GM12878 (cell line): ENCODE measurements at regions of chr10 and their contacts with region 1.

Region 1: DNA sequence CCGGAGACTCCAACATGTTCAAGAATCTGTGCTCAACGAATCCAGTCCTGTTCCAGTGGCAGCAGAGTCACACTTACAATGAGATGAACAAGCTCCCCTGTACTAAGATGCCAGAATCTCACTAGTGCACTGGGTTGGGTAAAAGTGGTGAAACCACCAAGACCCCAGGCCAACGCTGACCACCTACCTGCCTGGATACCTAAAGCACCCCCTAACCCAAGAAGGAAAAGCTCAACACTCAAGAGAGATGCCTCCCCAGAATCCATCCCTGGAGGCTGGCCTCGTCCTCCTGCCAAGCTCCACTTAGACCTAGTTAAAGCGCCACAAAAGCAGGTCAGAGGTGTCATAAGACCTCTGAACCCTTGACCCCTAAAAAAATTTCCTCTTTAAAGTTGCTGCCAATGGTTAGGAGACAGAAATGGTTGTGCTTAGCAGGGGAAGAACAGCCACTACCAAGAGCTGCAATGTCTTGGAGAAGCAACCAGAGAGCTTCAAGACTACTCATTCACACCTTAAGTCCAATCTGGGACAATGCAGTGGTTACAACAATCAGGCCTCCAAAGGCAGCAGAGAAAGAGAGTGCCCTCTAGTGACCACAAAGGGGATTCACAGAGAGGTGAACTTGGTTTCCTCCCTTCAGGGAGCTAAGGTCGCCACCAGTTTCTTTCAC is 94.6 kb upstream of the MACROH2A2 start:
- DNase-seq: no peak
- ATAC-seq: peak; percentile 81
- H3K4me3 ChIP-seq: no peak overlapping the region
- H3K27ac ChIP-seq: no peak overlapping the region
- H3K4me1 ChIP-seq: peaks cover 9% of the 10 kb centered on the region
- H3K27me3 ChIP-seq: peaks cover 0 to 2% of the 10 kb centered on the region in 2 experiments; a peak in 2 of 4 replicates
- CTCF ChIP-seq: peak; percentile 84 to 91 (median 90)
- EP300 ChIP-seq: no peak
- POLR2A ChIP-seq: no peak
- RAD21 ChIP-seq: peak; percentile 83

Region 2: DNA sequence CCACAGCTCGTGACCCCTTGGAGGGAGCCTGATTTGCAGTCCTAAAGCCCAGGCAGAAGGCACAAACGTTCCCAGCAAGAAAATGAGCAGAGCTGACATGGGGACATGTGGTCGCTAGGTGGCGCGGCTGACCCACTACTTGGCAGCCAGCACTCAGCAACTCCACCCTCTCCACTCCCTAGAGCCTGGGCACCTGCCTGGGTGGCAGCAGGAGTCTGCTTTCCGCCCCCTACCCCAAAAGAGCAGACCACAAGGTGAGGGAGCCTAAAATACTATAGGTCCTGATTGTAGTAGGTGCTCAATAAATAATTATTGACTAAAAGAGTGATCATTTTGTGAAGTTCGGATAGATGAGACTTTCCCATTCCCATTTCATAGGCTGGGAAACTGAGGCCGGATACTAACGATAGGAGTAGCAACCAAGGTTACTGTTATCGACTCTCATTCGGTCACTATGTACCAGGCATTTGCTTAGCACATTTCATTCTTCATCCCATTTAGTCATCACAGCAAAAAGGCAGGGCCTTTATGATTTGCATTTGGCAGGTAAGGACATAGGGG is 442.2 kb before region 1 on chr10:
- CTCF ChIA-PET with region 1: interaction called, 11 read pairs
- POLR2A ChIA-PET with region 1: no interaction called
- RAD21 ChIA-PET with region 1: no interaction called
- SMC1A ChIA-PET with region 1: no interaction called
- in situ Hi-C with region 1: no loop called
- intact Hi-C with region 1: no loop called
- DNase-seq: peak; percentile 16
- ATAC-seq: peak; percentile 100
- H3K4me3 ChIP-seq: no peak overlapping the region
- H3K27ac ChIP-seq: no peak overlapping the region
- H3K4me1 ChIP-seq: no peaks in the 10 kb centered on the region
- H3K27me3 ChIP-seq: no peaks in the 10 kb centered on the region; a peak in 1 of 4 replicates
- CTCF ChIP-seq: peak; percentile 92 to 98 (median 93); a peak in 5 of 6 replicates
- EP300 ChIP-seq: no peak
- POLR2A ChIP-seq: no peak
- RAD21 ChIP-seq: peak; percentile 85

Region 3: DNA sequence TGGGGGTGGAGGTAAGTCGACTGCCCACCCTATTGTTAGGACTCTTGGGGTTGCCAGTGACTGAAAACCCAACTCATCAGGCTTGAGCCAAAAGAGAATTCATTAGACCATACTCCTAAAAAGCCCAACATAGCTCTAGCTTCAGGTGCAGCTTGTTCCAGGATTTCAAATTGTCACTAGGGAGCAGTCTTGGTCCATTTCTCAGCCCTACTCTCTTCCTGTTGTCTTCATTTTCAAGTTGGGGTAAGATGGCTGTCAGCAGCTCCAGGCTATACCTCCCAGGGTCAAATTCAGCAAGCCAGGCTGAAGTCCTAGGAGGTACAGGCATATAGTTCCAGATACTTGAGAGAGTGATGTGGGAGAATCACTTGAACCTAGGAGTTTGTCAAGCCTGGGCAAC is 171.2 kb before region 1 on chr10:
- CTCF ChIA-PET with region 1: interaction called, 14 read pairs
- POLR2A ChIA-PET with region 1: no interaction called
- RAD21 ChIA-PET with region 1: interaction called, 8 read pairs
- SMC1A ChIA-PET with region 1: interaction called, 4 read pairs
- in situ Hi-C with region 1: no loop called
- intact Hi-C with region 1: no loop called
- DNase-seq: no peak
- ATAC-seq: no peak
- H3K4me3 ChIP-seq: no peak overlapping the region
- H3K27ac ChIP-seq: no peak overlapping the region
- H3K4me1 ChIP-seq: no peaks in the 10 kb centered on the region
- H3K27me3 ChIP-seq: peaks cover 0 to 1% of the 10 kb centered on the region in 2 experiments; a peak in 2 of 4 replicates
- CTCF ChIP-seq: peak in 2 of 3 experiments; percentile 9 to 16; a peak in 2 of 6 replicates
- EP300 ChIP-seq: no peak
- POLR2A ChIP-seq: no peak
- RAD21 ChIP-seq: peak; percentile 19; the same call in 1 of the 2 replicates

Region 4: DNA sequence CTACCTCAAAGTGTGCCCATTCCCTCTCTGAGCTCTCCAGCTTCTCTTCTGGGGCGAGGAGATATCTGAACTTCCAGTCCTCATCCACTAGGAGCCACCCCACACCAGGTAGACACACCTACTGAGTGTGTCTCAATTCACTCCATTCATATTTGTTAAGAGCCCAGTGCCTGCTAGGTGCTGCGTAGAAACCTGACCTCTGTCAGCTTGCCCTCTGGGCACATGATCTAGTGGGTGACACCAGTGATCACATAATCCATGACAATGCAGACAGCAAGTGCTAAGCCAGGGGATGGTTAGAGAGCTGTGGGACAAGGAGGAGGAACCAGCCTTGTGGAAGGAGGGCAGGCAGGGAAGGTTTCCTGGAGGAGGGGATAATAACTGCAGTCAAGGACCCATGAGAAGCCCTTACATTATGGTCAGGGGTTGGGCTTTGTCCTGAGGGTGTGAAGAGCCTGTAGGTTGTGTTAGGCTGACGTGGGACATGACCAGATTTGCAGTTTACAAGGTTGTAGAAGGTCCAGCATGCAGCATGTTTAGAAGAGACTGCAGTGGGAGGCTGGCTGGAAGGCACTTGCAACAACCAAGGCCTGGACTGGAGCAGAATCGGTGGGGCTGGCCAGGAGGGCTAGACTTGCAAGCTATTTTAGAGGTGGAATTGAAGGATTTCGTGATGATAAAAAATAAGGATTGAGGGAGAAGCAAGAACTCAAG is 74.6 kb before region 1 on chr10:
- CTCF ChIA-PET with region 1: interaction called, 6 read pairs
- POLR2A ChIA-PET with region 1: no interaction called
- RAD21 ChIA-PET with region 1: interaction called, 12 read pairs
- SMC1A ChIA-PET with region 1: interaction called, 3 read pairs
- in situ Hi-C with region 1: no loop called
- intact Hi-C with region 1: no loop called
- DNase-seq: no peak
- ATAC-seq: peak; percentile 44; the same call in 2 of the 3 replicates
- H3K4me3 ChIP-seq: no peak overlapping the region
- H3K27ac ChIP-seq: no peak overlapping the region
- H3K4me1 ChIP-seq: no peaks in the 10 kb centered on the region
- H3K27me3 ChIP-seq: peaks cover 0 to 2% of the 10 kb centered on the region in 2 experiments; a peak in 3 of 4 replicates
- CTCF ChIP-seq: peak in 2 of 3 experiments; percentile 10 to 26; a peak in 3 of 6 replicates
- EP300 ChIP-seq: no peak
- POLR2A ChIP-seq: no peak
- RAD21 ChIP-seq: peak; percentile 25; the same call in 1 of the 2 replicates

Region 5: DNA sequence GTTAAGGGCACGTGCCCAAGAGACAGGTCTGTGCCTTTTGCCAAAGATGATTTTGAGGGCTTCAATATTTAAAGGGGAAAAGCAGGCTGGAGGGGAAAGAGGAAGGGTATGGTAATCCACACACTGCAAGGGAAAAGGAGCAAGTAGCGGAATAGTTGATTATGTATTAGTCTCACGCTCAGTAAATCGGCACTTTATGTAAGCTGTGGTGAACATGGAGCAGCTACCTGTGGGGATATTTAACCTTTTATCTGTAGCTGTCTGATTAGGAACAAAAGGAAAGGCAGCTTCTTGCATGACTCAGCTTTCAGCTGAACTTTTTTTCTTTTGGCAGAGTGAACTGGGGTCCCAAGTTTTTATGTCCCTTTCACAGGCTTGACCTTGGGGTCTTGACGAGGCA is 32.9 kb before region 1 on chr10:
- CTCF ChIA-PET with region 1: interaction called, 14 read pairs
- POLR2A ChIA-PET with region 1: no interaction called
- RAD21 ChIA-PET with region 1: no interaction called
- SMC1A ChIA-PET with region 1: interaction called, 5 read pairs
- in situ Hi-C with region 1: no loop called
- intact Hi-C with region 1: no loop called
- DNase-seq: no peak
- ATAC-seq: no peak
- H3K4me3 ChIP-seq: no peak overlapping the region
- H3K27ac ChIP-seq: no peak overlapping the region
- H3K4me1 ChIP-seq: no peaks in the 10 kb centered on the region
- H3K27me3 ChIP-seq: peaks cover 0 to 2% of the 10 kb centered on the region in 2 experiments; a peak in 2 of 4 replicates
- CTCF ChIP-seq: no peak
- EP300 ChIP-seq: no peak
- POLR2A ChIP-seq: no peak
- RAD21 ChIP-seq: no peak

Region 6: DNA sequence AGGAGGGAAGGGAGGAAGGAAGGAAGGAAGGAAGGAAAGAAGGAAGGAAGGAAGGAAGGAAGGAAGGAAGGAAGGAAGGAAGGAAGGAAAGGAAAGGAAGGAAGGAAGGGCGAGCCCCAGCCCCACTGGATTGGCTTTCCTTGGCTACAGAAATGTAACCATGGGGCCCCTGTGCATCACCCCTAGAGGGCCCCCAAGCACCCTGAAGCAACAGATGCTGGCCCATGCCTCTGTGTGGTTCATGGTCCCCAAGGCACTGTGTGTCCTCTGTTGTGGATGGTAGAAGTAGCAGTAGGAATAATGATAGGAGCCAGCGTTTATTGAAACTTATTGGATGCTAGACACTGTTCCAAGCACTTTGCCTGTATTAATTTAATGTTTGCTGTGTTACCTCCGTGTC is 21.9 kb before region 1 on chr10:
- CTCF ChIA-PET with region 1: interaction called, 100 read pairs
- POLR2A ChIA-PET with region 1: interaction called, 5 read pairs
- RAD21 ChIA-PET with region 1: interaction called, 37 read pairs
- SMC1A ChIA-PET with region 1: interaction called, 26 read pairs
- in situ Hi-C with region 1: no loop called
- intact Hi-C with region 1: loop called (anchors 1 kb)
- DNase-seq: no peak
- ATAC-seq: peak; percentile 83
- H3K4me3 ChIP-seq: no peak overlapping the region
- H3K27ac ChIP-seq: no peak overlapping the region
- H3K4me1 ChIP-seq: no peaks in the 10 kb centered on the region
- H3K27me3 ChIP-seq: peaks cover 0 to 2% of the 10 kb centered on the region in 2 experiments; a peak in 2 of 4 replicates
- CTCF ChIP-seq: peak; percentile 45 to 67 (median 60)
- EP300 ChIP-seq: no peak
- POLR2A ChIP-seq: no peak
- RAD21 ChIP-seq: peak; percentile 77

Region 7: GRCh38 chr10:70106958-70107791 is 149.2 kb after region 1 on chr10:
- CTCF ChIA-PET with region 1: no interaction called
- POLR2A ChIA-PET with region 1: interaction called, 10 read pairs
- RAD21 ChIA-PET with region 1: no interaction called
- SMC1A ChIA-PET with region 1: no interaction called
- in situ Hi-C with region 1: no loop called
- intact Hi-C with region 1: no loop called
- DNase-seq: peak; percentile 80
- ATAC-seq: peak; percentile 97
- H3K4me3 ChIP-seq: peak overlapping the region; percentile 8; the same call in 1 of the 2 replicates
- H3K27ac ChIP-seq: peak overlapping the region; percentile 56
- H3K4me1 ChIP-seq: peaks cover 18% of the 10 kb centered on the region
- H3K27me3 ChIP-seq: no peaks in the 10 kb centered on the region
- CTCF ChIP-seq: peak; percentile 38 to 66 (median 62)
- EP300 ChIP-seq: peak; percentile 40 to 69; a peak in 2 of 4 replicates
- POLR2A ChIP-seq: no peak; the same call in 1 of the 2 replicates
- RAD21 ChIP-seq: 0 out of 2 replicates have a peak, but pooled peaks have one; percentile 12